ENCODE measurements at regions of chr1 and their contacts with region 1.

Region 1: DNA sequence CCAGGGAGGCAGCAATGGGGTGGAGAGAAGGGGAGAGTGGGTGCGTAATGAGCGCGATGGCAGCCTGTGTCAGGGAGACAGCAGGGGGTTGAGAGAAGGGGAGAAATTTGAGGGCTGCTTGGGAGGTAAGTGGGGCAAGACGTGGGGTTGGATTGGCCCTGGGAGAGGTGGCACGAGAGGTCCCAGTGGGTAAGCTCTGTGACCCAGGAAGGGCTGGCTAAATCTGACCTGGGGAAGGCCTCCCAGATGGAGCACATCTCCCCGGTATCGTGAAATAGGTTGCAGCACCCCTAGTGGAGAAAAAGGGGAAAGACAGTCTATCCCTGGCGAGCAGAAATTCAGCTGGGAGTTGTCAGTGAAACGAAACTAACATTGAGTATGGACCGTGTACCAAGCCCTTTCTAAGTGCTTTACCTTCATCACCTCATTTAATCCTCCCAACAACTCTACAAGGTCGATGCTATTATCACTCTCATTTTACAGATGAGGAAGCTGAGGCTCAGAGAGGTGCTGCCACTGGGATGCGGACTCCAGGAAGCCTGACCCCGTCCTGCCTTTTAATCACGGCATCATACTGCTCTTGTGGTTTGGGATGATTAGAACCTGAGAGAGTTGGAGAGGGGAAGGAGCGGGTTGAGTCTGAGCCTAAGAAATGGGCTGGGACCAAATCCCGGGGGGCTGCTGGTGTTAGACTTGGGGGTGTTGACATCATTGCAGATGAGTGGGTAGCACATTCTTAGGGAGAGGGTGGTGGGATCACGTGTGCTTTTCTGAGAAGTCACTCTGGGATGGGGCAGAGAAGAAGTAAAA is 56.6 kb upstream of the RPL11 start:
- DNase-seq: peak; percentile 84
- CTCF ChIP-seq: peak; percentile 88

Region 2: GRCh38 chr1:22808676-22809483 is 826.2 kb before region 1 on chr1:
- CTCF ChIA-PET with region 1: no interaction called
- POLR2A ChIA-PET with region 1: no interaction called
- DNase-seq: no peak
- CTCF ChIP-seq: no peak

Region 3: GRCh38 chr1:23496490-23497181 is 138.4 kb before region 1 on chr1:
- CTCF ChIA-PET with region 1: interaction called, 157 read pairs
- POLR2A ChIA-PET with region 1: no interaction called
- DNase-seq: no peak
- CTCF ChIP-seq: no peak

Region 4: GRCh38 chr1:23539698-23540266 is 95.3 kb before region 1 on chr1:
- CTCF ChIA-PET with region 1: interaction called, 858 read pairs
- POLR2A ChIA-PET with region 1: interaction called, 5 read pairs
- DNase-seq: peak; percentile 91
- CTCF ChIP-seq: peak; percentile 95

Region 5: DNA sequence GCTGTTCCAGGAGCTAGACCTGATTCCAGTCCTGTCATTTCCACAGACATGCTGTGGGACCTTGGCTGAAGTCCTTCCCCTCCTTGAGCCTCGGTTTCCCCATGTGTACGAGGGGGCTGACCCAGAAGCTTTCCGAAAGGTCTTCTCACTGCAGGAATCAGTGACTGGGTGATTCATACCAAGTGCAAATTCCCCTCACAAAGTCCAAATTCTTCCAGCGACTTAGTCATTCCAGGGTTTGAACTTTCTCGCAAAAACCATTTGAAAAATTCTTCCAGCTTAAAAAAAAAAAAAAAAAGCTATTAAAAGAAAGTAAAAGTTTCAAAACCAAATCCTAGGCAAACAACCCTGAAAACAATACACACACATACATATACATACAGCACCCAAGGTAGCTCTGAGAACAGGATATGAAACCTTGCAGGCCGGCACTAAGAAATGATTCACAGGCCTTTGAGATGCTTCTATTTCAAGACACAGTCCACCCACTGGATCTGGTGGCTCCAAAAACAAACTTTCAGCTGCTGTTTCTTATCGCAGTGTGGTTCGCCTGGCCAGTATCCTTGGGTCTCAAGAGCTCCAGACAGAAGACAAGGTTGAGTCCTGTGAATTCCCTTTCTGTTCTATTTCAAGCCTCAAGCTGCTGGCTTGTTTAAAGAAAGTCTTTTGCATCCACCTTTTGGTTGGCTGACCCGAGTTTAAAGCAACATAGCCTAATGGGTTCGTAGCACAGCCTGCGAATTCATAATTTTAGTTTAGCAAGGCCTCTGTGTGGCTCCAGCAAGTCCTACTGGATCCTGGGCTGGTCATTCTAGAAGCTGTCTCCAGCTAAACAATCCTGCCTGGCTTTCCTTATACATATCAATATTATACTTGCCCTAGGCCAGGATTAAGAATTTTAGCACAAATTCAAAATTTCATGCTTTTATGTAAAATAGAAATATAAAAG is 57.7 kb before region 1 on chr1:
- CTCF ChIA-PET with region 1: interaction called, 29 read pairs
- POLR2A ChIA-PET with region 1: no interaction called
- DNase-seq: peak; percentile 77
- CTCF ChIP-seq: no peak

Region 6: DNA sequence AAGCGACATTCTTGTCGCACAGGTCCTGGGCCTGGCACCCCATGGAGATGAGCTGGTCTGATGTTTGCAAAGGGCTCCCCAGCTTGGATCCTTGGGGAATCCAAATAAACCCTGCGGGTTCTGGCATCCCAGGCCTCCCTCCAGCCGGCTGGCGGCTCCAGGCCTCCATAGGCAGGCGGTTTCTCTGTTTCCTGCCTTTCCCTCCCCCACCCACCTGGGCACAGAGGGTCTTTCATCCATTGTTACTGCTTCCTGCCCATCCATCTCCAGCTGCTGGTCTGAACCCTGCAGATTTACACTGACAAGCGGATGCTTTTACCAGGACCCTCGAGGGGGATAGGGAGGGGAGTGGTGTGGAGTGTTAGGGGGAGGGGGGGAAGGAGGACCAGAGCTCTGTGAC is 36.6 kb before region 1 on chr1:
- CTCF ChIA-PET with region 1: interaction called, 34 read pairs
- POLR2A ChIA-PET with region 1: no interaction called
- DNase-seq: no peak
- CTCF ChIP-seq: no peak

Region 7: DNA sequence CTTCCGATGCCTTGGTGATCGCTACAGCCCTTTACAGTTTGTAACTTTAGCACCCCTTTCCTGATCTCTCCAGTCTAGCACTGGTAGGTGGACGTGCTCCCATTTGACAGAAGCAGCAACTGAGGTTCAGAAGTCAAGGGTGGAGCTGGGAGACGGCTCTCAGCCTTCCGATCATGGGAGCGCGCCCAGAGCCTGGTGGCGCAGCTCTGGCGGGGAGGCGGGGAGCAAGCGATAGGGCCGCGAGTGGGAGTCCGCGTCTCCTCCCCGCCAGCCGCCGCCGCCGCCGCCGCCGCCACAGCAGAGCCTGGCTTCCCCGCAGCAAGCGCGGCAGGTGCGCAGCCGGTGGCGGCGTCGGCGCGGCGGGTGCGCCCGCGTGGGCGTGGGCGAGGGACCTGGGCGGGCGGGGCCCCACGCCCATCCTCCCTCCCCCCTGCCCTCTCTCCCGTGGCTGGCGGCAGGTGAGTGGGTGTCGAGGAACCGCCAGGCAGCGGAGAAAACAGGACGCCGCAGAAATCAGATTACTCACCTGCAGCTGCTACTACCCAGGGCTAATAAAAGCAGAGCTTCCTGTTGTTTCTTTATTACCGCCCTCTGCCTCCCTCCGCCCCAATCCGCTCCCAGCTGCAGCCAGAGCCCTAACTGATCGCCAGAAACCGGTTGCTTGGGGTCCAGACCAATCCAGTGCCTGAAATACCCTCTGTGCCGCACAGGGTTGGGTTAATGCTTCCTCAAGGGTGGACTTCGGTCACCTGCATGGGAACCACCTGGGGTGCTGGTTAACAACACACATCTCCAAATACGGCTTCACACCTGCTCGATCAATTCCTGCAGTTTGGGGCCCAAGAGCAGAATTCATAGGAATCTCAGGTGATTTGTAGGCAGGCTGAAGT is 15.5 kb before region 1 on chr1:
- CTCF ChIA-PET with region 1: interaction called, 133 read pairs
- POLR2A ChIA-PET with region 1: no interaction called
- DNase-seq: peak; percentile 87
- CTCF ChIP-seq: no peak

Region 8: GRCh38 chr1:23657659-23658275 is 22.7 kb after region 1 on chr1:
- CTCF ChIA-PET with region 1: interaction called, 39 read pairs
- POLR2A ChIA-PET with region 1: no interaction called
- DNase-seq: peak; percentile 70
- CTCF ChIP-seq: peak; percentile 76

Measured in GM10248 (cell line).